ENCODE measurements at regions of chr15 and their contacts with region 1.

Region 1: GRCh38 chr15:81106560-81106959 is 27.5 kb upstream of the CFAP161 start:
- H3K4me3 Mint-ChIP-seq: no peak overlapping the region
- H3K27ac Mint-ChIP-seq: no peak overlapping the region
- H3K4me1 Mint-ChIP-seq: peaks cover 19% of the 10 kb centered on the region
- H3K27me3 Mint-ChIP-seq: peaks cover 42% of the 10 kb centered on the region

Region 2: GRCh38 chr15:80550219-80550907 is 556.2 kb before region 1 on chr15:
- intact Hi-C with region 1: no loop called
- H3K4me3 Mint-ChIP-seq: no peak overlapping the region
- H3K27ac Mint-ChIP-seq: no peak overlapping the region
- H3K4me1 Mint-ChIP-seq: no peaks in the 10 kb centered on the region
- H3K27me3 Mint-ChIP-seq: peaks cover 17% of the 10 kb centered on the region

Region 3: GRCh38 chr15:80977627-80978036 is 128.9 kb before region 1 on chr15:
- intact Hi-C with region 1: loop called (anchors 5 kb)
- H3K4me3 Mint-ChIP-seq: no peak overlapping the region
- H3K27ac Mint-ChIP-seq: peak overlapping the region; percentile 68
- H3K4me1 Mint-ChIP-seq: peaks cover 36% of the 10 kb centered on the region
- H3K27me3 Mint-ChIP-seq: no peaks in the 10 kb centered on the region

Region 4: DNA sequence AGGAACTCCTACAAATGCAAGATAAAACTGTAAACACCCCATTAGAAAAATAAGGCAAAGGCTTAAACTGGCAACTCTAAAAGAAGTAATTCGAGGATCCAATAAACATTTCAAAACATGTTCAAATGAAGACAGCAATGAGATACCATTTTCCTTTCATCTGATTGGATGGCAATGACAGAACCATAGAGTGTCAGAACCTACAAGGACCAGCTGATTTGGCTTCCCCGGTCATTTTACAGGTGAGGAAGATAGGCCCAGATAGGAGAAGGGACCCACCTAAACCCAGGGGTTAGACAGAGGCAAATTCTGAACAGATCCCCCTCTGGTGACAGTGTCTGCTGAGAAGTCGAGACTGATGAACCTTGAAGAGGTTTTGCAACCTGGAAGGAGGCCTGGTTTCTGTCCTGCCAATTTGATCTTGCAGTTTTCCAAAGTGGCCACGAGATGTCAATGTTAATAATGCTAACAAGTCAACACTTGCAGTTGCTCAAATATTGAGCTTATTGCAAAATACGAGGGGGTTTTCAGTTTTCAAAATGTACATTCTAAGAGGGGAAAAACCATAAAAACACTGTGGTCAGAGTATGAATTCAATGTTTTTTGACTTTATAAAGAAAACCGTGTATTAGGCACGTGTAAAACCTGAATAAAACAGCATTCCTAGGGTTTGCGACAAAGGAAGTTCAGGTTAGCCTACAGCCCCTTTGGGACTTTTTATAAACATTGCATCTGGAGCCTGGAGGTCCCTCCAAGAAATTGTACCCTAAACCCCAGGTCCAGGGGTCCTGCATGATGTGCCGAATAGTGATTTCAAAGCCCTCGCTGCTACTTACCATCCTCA is 49.0 kb after region 1 on chr15:
- intact Hi-C with region 1: loop called (anchors 2 kb)
- H3K4me3 Mint-ChIP-seq: no peak overlapping the region
- H3K27ac Mint-ChIP-seq: no peak overlapping the region
- H3K4me1 Mint-ChIP-seq: no peaks in the 10 kb centered on the region
- H3K27me3 Mint-ChIP-seq: peaks cover 6% of the 10 kb centered on the region